ENCODE measurements at regions of chr2 and their contacts with region 1.

Region 1: GRCh38 chr2:197873293-197873701 is 68.9 kb downstream of the PLCL1 start:
- DNase-seq: no peak
- ATAC-seq: no peak
- H3K4me3 ChIP-seq: no peak overlapping the region
- H3K4me3 Mint-ChIP-seq: no peak overlapping the region
- H3K27ac ChIP-seq: no peak overlapping the region
- H3K27ac Mint-ChIP-seq: no peak overlapping the region
- H3K4me1 ChIP-seq: peaks cover 22% of the 10 kb centered on the region
- H3K4me1 Mint-ChIP-seq: peaks cover 40% of the 10 kb centered on the region
- H3K27me3 ChIP-seq: no peaks in the 10 kb centered on the region
- H3K27me3 Mint-ChIP-seq: no peaks in the 10 kb centered on the region
- CTCF ChIP-seq: no peak

Region 2: GRCh38 chr2:197717858-197718257 is 155.4 kb before region 1 on chr2:
- CTCF ChIA-PET with region 1: no interaction called
- POLR2A ChIA-PET with region 1: no interaction called
- intact Hi-C with region 1: no loop called
- DNase-seq: no peak
- ATAC-seq: no peak
- H3K4me3 ChIP-seq: no peak overlapping the region
- H3K4me3 Mint-ChIP-seq: no peak overlapping the region
- H3K27ac ChIP-seq: no peak overlapping the region
- H3K27ac Mint-ChIP-seq: no peak overlapping the region
- H3K4me1 ChIP-seq: no peaks in the 10 kb centered on the region
- H3K4me1 Mint-ChIP-seq: peaks cover 13% of the 10 kb centered on the region
- H3K27me3 ChIP-seq: no peaks in the 10 kb centered on the region
- H3K27me3 Mint-ChIP-seq: no peaks in the 10 kb centered on the region
- CTCF ChIP-seq: no peak

Region 3: GRCh38 chr2:197838036-197838435 is 35.3 kb before region 1 on chr2:
- CTCF ChIA-PET with region 1: no interaction called
- POLR2A ChIA-PET with region 1: no interaction called
- intact Hi-C with region 1: loop called in 1 of 2 experiments (anchors 5 kb)
- DNase-seq: peak in 2 of 9 experiments; percentile 40 to 66
- ATAC-seq: peak; percentile 88
- H3K4me3 ChIP-seq: peak overlapping the region in 1 of 2 experiments; percentile 30
- H3K4me3 Mint-ChIP-seq: peak overlapping the region; percentile 69
- H3K27ac ChIP-seq: peak overlapping the region; percentile 42 to 47
- H3K27ac Mint-ChIP-seq: peak overlapping the region; percentile 87
- H3K4me1 ChIP-seq: peaks cover 23% of the 10 kb centered on the region
- H3K4me1 Mint-ChIP-seq: peaks cover 45% of the 10 kb centered on the region
- H3K27me3 ChIP-seq: no peaks in the 10 kb centered on the region
- H3K27me3 Mint-ChIP-seq: no peaks in the 10 kb centered on the region
- CTCF ChIP-seq: no peak

Region 4: GRCh38 chr2:197889041-197889440 is 15.7 kb after region 1 on chr2:
- CTCF ChIA-PET with region 1: no interaction called
- POLR2A ChIA-PET with region 1: interaction called, 3 read pairs
- intact Hi-C with region 1: loop called in 1 of 2 experiments (anchors 2 kb)
- DNase-seq: peak in 3 of 9 experiments; percentile 8 to 56 (median 37)
- ATAC-seq: peak; percentile 88
- H3K4me3 ChIP-seq: no peak overlapping the region
- H3K4me3 Mint-ChIP-seq: peak overlapping the region; percentile 19
- H3K27ac ChIP-seq: no peak overlapping the region
- H3K27ac Mint-ChIP-seq: peak overlapping the region; percentile 83
- H3K4me1 ChIP-seq: peaks cover 24% of the 10 kb centered on the region
- H3K4me1 Mint-ChIP-seq: peaks cover 37% of the 10 kb centered on the region
- H3K27me3 ChIP-seq: no peaks in the 10 kb centered on the region
- H3K27me3 Mint-ChIP-seq: no peaks in the 10 kb centered on the region
- CTCF ChIP-seq: no peak

Region 5: DNA sequence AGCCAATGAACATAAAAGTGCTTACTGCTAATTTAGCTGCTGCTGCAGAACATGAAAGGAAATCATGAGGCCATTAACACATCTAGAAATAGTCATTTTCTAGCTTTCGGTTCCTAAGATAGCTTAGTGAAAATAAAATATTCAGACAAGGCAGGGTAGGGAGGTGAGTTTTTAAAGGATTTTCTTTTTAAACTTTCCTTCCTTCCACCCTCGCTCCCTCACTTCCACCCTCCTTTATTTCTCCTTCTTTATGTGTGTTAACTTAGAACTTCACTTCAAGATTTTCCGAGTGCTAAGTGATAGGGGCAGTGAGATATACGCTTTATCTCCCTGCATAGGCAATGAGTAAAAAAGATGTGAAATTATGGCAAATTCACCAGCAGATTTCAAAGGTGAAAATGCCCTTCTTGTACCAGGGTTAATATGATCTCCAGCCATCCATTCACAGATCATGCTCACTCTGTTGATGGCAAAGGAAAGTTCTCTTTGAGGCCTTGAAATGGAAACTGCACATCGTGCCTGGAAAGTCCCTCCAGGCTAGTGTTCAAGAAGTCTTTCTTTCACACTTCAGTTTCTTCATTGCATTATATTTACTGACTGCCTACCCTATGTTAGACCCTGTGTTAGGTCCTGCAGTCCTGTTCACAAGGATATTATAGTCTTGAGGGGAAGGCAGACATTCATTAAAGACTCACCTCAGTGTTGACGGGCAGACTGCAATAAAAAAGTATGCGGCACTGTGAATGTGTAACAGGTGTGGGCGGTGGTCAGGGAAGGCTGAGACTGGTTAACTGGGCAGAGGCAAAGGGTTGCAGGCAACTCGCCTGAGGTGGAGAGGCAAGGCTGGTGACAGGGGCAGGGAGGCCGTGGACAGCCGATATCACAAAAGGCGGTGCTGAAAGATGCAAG is 131.9 kb after region 1 on chr2:
- CTCF ChIA-PET with region 1: no interaction called
- POLR2A ChIA-PET with region 1: no interaction called
- intact Hi-C with region 1: no loop called
- DNase-seq: peak in 2 of 9 experiments; percentile 30 to 55
- ATAC-seq: peak; percentile 31
- H3K4me3 ChIP-seq: peak overlapping the region in 1 of 2 experiments; percentile 12
- H3K4me3 Mint-ChIP-seq: peak overlapping the region; percentile 42
- H3K27ac ChIP-seq: peak overlapping the region in 1 of 2 experiments; percentile 49
- H3K27ac Mint-ChIP-seq: peak overlapping the region; percentile 47
- H3K4me1 ChIP-seq: no peaks in the 10 kb centered on the region
- H3K4me1 Mint-ChIP-seq: peaks cover 16% of the 10 kb centered on the region
- H3K27me3 ChIP-seq: no peaks in the 10 kb centered on the region
- H3K27me3 Mint-ChIP-seq: no peaks in the 10 kb centered on the region
- CTCF ChIP-seq: no peak